Common myeloid progenitor, CD34-positive (primary cell): ENCODE measurements at regions of chr4 and their contacts with region 1.

Region 1: GRCh38 chr4:139030614-139031235 is 15.1 kb downstream of the NOCT start:
- DNase-seq: peak; percentile 86 to 93 (median 90)
- H3K4me3 ChIP-seq: peak overlapping the region in 5 of 7 experiments; percentile 21 to 73 (median 50)
- H3K27ac ChIP-seq: peak overlapping the region in 1 of 2 experiments; percentile 23
- H3K4me1 ChIP-seq: peaks cover 2 to 7% (median 6%) of the 10 kb centered on the region in 4 experiments
- H3K27me3 ChIP-seq: no peaks in the 10 kb centered on the region

Region 2: GRCh38 chr4:139015269-139015947 is 15.3 kb before region 1 on chr4 and contains the start of gene NOCT:
- CTCF ChIA-PET with region 1: interaction called, 21 read pairs
- POLR2A ChIA-PET with region 1: no interaction called
- DNase-seq: peak; percentile 91 to 96 (median 96)
- H3K4me3 ChIP-seq: peak within 1 kb of the TSS; percentile 78 to 98 (median 92)
- H3K27ac ChIP-seq: peak within 1 kb of the TSS; percentile 97 to 98
- H3K4me1 ChIP-seq: peaks cover 13 to 40% (median 21%) of the 10 kb centered on the region in 4 experiments
- H3K27me3 ChIP-seq: no peaks in the 10 kb centered on the region

Region 3: GRCh38 chr4:139042981-139043460 is 12.3 kb after region 1 on chr4:
- CTCF ChIA-PET with region 1: interaction called, 12 read pairs
- POLR2A ChIA-PET with region 1: interaction called, 4 read pairs
- DNase-seq: no peak
- H3K4me3 ChIP-seq: no peak overlapping the region
- H3K27ac ChIP-seq: no peak overlapping the region
- H3K4me1 ChIP-seq: peaks cover 0 to 2% (median 0%) of the 10 kb centered on the region in 4 experiments
- H3K27me3 ChIP-seq: no peaks in the 10 kb centered on the region

Region 4: GRCh38 chr4:139083956-139084803 is 53.5 kb after region 1 on chr4:
- CTCF ChIA-PET with region 1: interaction called, 16 read pairs
- POLR2A ChIA-PET with region 1: interaction called, 3 read pairs
- DNase-seq: peak; percentile 94 to 98 (median 96)
- H3K4me3 ChIP-seq: peak overlapping the region; percentile 56 to 100 (median 93)
- H3K27ac ChIP-seq: peak overlapping the region; percentile 78 to 94
- H3K4me1 ChIP-seq: peaks cover 15 to 47% (median 30%) of the 10 kb centered on the region in 4 experiments
- H3K27me3 ChIP-seq: no peaks in the 10 kb centered on the region

Region 5: DNA sequence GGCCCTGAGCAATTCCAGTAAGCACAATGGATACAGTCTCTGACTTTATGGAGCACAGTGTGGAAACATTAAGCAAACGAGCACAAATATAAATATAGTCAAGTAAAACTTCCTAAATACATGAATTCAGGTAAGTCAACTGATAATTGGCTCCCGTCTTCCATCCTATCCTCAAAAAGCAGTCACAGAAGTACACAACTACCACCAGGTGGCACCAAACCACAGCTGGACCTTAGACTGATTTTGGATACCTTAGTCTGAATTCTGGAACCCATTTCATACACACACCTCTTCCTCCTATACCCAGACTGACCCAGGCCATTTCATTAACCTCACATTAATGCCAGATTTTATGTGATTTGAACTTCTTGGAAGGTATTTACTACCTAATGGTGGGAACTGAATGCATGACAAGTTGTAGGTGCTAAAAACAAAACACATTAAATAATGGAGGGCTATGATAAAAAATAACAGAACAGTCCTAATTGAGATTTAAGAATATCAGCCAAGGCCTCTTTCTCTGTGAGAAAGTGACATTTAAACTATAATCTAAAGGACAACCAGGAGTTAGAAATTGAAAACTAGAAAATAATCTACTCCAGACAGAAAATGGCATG is 68.7 kb after region 1 on chr4:
- CTCF ChIA-PET with region 1: interaction called, 12 read pairs
- POLR2A ChIA-PET with region 1: no interaction called
- DNase-seq: peak; percentile 86 to 95 (median 91)
- H3K4me3 ChIP-seq: no peak overlapping the region
- H3K27ac ChIP-seq: no peak overlapping the region
- H3K4me1 ChIP-seq: peaks cover 0 to 2% (median 0%) of the 10 kb centered on the region in 4 experiments
- H3K27me3 ChIP-seq: no peaks in the 10 kb centered on the region

Region 6: GRCh38 chr4:139229534-139230039 is 198.9 kb after region 1 on chr4:
- CTCF ChIA-PET with region 1: interaction called, 12 read pairs
- POLR2A ChIA-PET with region 1: no interaction called
- DNase-seq: peak; percentile 48 to 72 (median 71)
- H3K4me3 ChIP-seq: no peak overlapping the region
- H3K27ac ChIP-seq: no peak overlapping the region
- H3K4me1 ChIP-seq: peaks cover 0 to 8% (median 0%) of the 10 kb centered on the region in 4 experiments
- H3K27me3 ChIP-seq: no peaks in the 10 kb centered on the region

Region 7: DNA sequence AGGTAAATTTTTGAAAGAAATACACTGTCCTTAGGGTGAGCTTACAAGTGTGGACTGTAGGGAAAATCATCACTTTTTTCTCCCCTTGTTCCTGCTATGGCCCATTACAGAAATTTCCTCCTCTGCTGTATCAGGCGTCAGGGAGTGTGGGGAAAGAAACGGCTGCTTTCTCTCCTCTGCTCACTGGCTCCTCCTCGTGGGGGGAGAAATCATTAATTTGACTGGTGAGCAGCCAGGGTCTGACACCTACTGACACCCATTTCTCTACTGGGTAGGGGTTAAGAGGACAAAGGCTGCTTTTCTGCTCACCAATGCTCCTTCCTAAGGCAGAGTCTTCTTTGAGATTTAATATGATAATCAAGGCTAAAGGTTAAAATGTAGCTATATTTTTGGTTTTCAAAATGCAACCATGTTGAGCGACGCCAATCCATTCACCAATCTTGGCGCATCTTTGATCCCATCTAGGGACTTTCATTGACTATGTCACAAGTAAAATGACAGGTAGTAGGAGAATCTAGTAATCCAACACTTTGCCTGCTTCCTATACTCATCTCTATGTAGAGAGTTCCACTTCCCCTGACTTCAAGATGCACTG is 500.2 kb after region 1 on chr4:
- CTCF ChIA-PET with region 1: interaction called, 13 read pairs
- POLR2A ChIA-PET with region 1: no interaction called
- DNase-seq: peak; percentile 48 to 65 (median 60)
- H3K4me3 ChIP-seq: no peak overlapping the region
- H3K27ac ChIP-seq: no peak overlapping the region
- H3K4me1 ChIP-seq: peaks cover 6 to 15% (median 12%) of the 10 kb centered on the region in 4 experiments
- H3K27me3 ChIP-seq: no peaks in the 10 kb centered on the region